ENCODE measurements at regions of chr19 and their contacts with region 1.

Region 1: GRCh38 chr19:10936661-10937084 is 8.1 kb downstream of the TIMM29 start:
- DNase-seq: peak; percentile 53
- ATAC-seq: peak; percentile 91
- H3K4me3 Mint-ChIP-seq: no peak overlapping the region
- H3K27ac Mint-ChIP-seq: no peak overlapping the region
- H3K4me1 Mint-ChIP-seq: peaks cover 17% of the 10 kb centered on the region
- H3K27me3 Mint-ChIP-seq: no peaks in the 10 kb centered on the region

Region 2: GRCh38 chr19:10870955-10871603 is 65.6 kb before region 1 on chr19 and contains the start of gene CARM1:
- CTCF ChIA-PET with region 1: interaction called, 14 read pairs
- DNase-seq: peak; percentile 99
- ATAC-seq: peak; percentile 89
- H3K4me3 Mint-ChIP-seq: peak within 1 kb of the TSS; percentile 79
- H3K27ac Mint-ChIP-seq: peak within 1 kb of the TSS; percentile 84
- H3K4me1 Mint-ChIP-seq: peaks cover 29% of the 10 kb centered on the region
- H3K27me3 Mint-ChIP-seq: no peaks in the 10 kb centered on the region
- total RNA-seq, gene CARM1: 38.5 to 48.1 TPM

Region 3: DNA sequence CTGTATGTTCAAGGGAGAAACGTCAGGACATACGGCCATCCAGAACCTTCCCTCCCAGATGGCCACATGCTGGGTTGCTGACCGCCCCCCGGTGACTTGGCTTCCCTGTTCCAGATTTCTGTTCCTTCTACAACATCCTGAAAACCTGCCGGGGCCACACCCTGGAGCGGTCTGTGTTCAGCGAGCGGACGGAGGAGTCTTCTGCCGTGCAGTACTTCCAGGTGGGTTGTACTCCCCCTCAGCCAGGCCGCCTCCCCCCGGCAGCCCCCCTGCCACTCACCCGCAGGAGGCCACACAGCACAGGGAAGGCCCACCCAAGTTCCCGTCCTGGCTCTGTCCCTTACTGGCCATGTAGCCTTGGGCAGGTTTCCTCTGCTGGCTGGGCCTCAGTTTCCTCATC is 28.7 kb before region 1 on chr19:
- CTCF ChIA-PET with region 1: no interaction called
- DNase-seq: no peak
- ATAC-seq: no peak
- H3K4me3 Mint-ChIP-seq: no peak overlapping the region
- H3K27ac Mint-ChIP-seq: no peak overlapping the region
- H3K4me1 Mint-ChIP-seq: no peaks in the 10 kb centered on the region
- H3K27me3 Mint-ChIP-seq: no peaks in the 10 kb centered on the region

Region 4: GRCh38 chr19:10952809-10953208 is 16.1 kb after region 1 on chr19:
- CTCF ChIA-PET with region 1: interaction called, 19 read pairs
- DNase-seq: no peak
- ATAC-seq: no peak
- H3K4me3 Mint-ChIP-seq: no peak overlapping the region
- H3K27ac Mint-ChIP-seq: no peak overlapping the region
- H3K4me1 Mint-ChIP-seq: peaks cover 4% of the 10 kb centered on the region
- H3K27me3 Mint-ChIP-seq: no peaks in the 10 kb centered on the region

Region 5: GRCh38 chr19:10960314-10961072 is 23.8 kb after region 1 on chr19 and contains the start of gene SMARCA4:
- CTCF ChIA-PET with region 1: interaction called, 18 read pairs
- DNase-seq: peak; percentile 98
- ATAC-seq: peak; percentile 84
- H3K4me3 Mint-ChIP-seq: peak within 1 kb of the TSS; percentile 87
- H3K27ac Mint-ChIP-seq: peak within 1 kb of the TSS; percentile 87
- H3K4me1 Mint-ChIP-seq: peaks cover 43% of the 10 kb centered on the region
- H3K27me3 Mint-ChIP-seq: no peaks in the 10 kb centered on the region
- total RNA-seq, gene SMARCA4: 107 to 114 TPM

Region 6: GRCh38 chr19:11035441-11036377 is 99.0 kb after region 1 on chr19:
- CTCF ChIA-PET with region 1: interaction called, 26 read pairs
- DNase-seq: peak; percentile 92
- ATAC-seq: peak; percentile 98
- H3K4me3 Mint-ChIP-seq: no peak overlapping the region
- H3K27ac Mint-ChIP-seq: peak overlapping the region; percentile 66
- H3K4me1 Mint-ChIP-seq: peaks cover 8% of the 10 kb centered on the region
- H3K27me3 Mint-ChIP-seq: no peaks in the 10 kb centered on the region

Region 7: GRCh38 chr19:11090054-11090900 is 153.6 kb after region 1 on chr19:
- CTCF ChIA-PET with region 1: interaction called, 14 read pairs
- DNase-seq: peak; percentile 99
- ATAC-seq: peak; percentile 82
- H3K4me3 Mint-ChIP-seq: peak overlapping the region; percentile 90
- H3K27ac Mint-ChIP-seq: peak overlapping the region; percentile 99
- H3K4me1 Mint-ChIP-seq: peaks cover 53% of the 10 kb centered on the region
- H3K27me3 Mint-ChIP-seq: no peaks in the 10 kb centered on the region

Region 8: GRCh38 chr19:11096210-11096841 is 159.7 kb after region 1 on chr19:
- CTCF ChIA-PET with region 1: interaction called, 10 read pairs
- DNase-seq: peak; percentile 72
- ATAC-seq: peak; percentile 54
- H3K4me3 Mint-ChIP-seq: peak overlapping the region; percentile 66
- H3K27ac Mint-ChIP-seq: peak overlapping the region; percentile 96
- H3K4me1 Mint-ChIP-seq: peaks cover 69% of the 10 kb centered on the region
- H3K27me3 Mint-ChIP-seq: no peaks in the 10 kb centered on the region

Region 9: GRCh38 chr19:11528551-11529341 is 592.1 kb after region 1 on chr19 and contains the start of gene ECSIT:
- CTCF ChIA-PET with region 1: no interaction called
- DNase-seq: peak; percentile 97
- ATAC-seq: peak; percentile 99
- H3K4me3 Mint-ChIP-seq: peak within 1 kb of the TSS; percentile 92
- H3K27ac Mint-ChIP-seq: peak within 1 kb of the TSS; percentile 86
- H3K4me1 Mint-ChIP-seq: peaks cover 25% of the 10 kb centered on the region
- H3K27me3 Mint-ChIP-seq: no peaks in the 10 kb centered on the region
- total RNA-seq, gene ECSIT: 33.0 to 36.2 TPM

Measured in activated CD8-positive, alpha-beta memory T cell treated with anti-CD3 and anti-CD28 coated beads, Interleukin-2, amount 10 ng/mL, durations not matched to agents 7 days and 5 days (primary cell).